CD4-positive, alpha-beta T cell (primary cell): ENCODE measurements at regions of chr14 and their contacts with region 1.

Region 1: DNA sequence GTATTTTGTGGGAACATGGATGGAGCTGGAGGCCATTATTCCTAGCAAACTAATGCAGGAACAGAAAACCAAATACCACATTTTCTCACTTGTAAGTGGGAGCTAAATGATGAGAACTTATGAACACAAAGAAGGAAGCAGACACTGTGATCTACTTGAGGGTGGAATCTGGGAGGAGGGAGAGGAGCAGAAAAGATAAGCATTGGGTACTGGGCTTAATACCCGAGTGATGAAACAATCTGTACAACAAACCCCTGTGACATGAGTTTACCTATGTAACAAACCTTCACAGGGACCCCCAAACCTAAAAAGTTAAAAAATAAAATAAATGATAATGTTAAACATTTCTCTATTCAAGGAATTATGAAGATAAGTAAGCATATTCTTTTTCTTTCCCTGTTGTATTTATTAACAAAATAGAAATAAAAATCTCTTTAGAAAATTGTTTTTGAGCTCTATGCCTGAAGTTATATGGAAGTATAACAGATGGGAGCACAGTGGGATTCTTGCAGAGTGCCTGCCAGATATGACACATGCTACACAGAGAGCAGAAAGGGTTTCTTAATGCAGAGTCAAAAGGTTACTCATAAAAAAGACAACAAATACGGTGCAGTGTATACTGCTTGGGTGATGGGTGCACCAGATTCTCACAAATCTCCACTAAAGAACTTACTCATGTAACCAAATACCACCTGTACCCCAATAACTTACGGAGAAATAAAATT is 52.0 kb upstream of the SYNE2 start:
- DNase-seq: no peak
- ATAC-seq: no peak
- H3K4me3 ChIP-seq: no peak overlapping the region
- H3K4me3 Mint-ChIP-seq: no peak overlapping the region
- H3K27ac ChIP-seq: no peak overlapping the region
- H3K27ac Mint-ChIP-seq: no peak overlapping the region
- H3K4me1 ChIP-seq: no peaks in the 10 kb centered on the region
- H3K4me1 Mint-ChIP-seq: peaks cover 5% of the 10 kb centered on the region
- H3K27me3 ChIP-seq: no peaks in the 10 kb centered on the region
- H3K27me3 Mint-ChIP-seq: no peaks in the 10 kb centered on the region
- CTCF ChIP-seq: no peak

Region 2: GRCh38 chr14:63737582-63738006 is 63.2 kb before region 1 on chr14:
- CTCF ChIA-PET with region 1: no interaction called
- POLR2A ChIA-PET with region 1: no interaction called
- intact Hi-C with region 1: no loop called
- DNase-seq: no peak
- ATAC-seq: no peak
- H3K4me3 ChIP-seq: peak overlapping the region; percentile 27
- H3K4me3 Mint-ChIP-seq: peak overlapping the region; percentile 76
- H3K27ac ChIP-seq: no peak overlapping the region
- H3K27ac Mint-ChIP-seq: peak overlapping the region; percentile 31
- H3K4me1 ChIP-seq: peaks cover 11% of the 10 kb centered on the region
- H3K4me1 Mint-ChIP-seq: peaks cover 11% of the 10 kb centered on the region
- H3K27me3 ChIP-seq: no peaks in the 10 kb centered on the region
- H3K27me3 Mint-ChIP-seq: no peaks in the 10 kb centered on the region
- CTCF ChIP-seq: no peak

Region 3: DNA sequence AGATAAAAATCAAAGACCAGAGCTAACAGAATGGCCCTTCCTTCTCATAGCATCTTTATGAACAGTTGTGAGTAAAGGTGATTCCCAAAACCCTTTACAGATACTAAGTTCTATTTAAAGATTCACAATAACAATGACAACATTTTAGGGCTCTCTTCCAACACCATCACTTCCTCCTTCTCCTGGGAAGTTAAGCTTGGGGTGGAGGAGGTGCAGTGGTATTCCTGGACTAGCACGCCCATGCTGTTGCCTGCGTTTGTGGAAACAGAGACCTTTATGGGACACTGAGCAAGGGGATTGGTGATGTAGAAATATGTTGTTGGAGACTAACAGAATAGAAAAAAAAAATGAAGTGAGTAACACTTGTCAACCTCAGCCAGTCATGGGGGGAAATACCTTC is 74.5 kb after region 1 on chr14:
- CTCF ChIA-PET with region 1: no interaction called
- POLR2A ChIA-PET with region 1: no interaction called
- intact Hi-C with region 1: no loop called
- DNase-seq: no peak
- ATAC-seq: no peak
- H3K4me3 ChIP-seq: no peak overlapping the region
- H3K4me3 Mint-ChIP-seq: no peak overlapping the region
- H3K27ac ChIP-seq: no peak overlapping the region
- H3K27ac Mint-ChIP-seq: no peak overlapping the region
- H3K4me1 ChIP-seq: peaks cover 31% of the 10 kb centered on the region
- H3K4me1 Mint-ChIP-seq: peaks cover 43% of the 10 kb centered on the region
- H3K27me3 ChIP-seq: no peaks in the 10 kb centered on the region
- H3K27me3 Mint-ChIP-seq: no peaks in the 10 kb centered on the region
- CTCF ChIP-seq: no peak

Region 4: GRCh38 chr14:63993992-63994391 is 193.2 kb after region 1 on chr14:
- CTCF ChIA-PET with region 1: no interaction called
- POLR2A ChIA-PET with region 1: no interaction called
- intact Hi-C with region 1: loop called (anchors 1 to 2 kb)
- DNase-seq: peak in 4 of 14 experiments; percentile 7 to 32 (median 26)
- ATAC-seq: peak; percentile 44
- H3K4me3 ChIP-seq: no peak overlapping the region
- H3K4me3 Mint-ChIP-seq: no peak overlapping the region
- H3K27ac ChIP-seq: no peak overlapping the region
- H3K27ac Mint-ChIP-seq: no peak overlapping the region
- H3K4me1 ChIP-seq: peaks cover 2% of the 10 kb centered on the region
- H3K4me1 Mint-ChIP-seq: no peaks in the 10 kb centered on the region
- H3K27me3 ChIP-seq: no peaks in the 10 kb centered on the region
- H3K27me3 Mint-ChIP-seq: no peaks in the 10 kb centered on the region
- CTCF ChIP-seq: peak; percentile 39

Region 5: DNA sequence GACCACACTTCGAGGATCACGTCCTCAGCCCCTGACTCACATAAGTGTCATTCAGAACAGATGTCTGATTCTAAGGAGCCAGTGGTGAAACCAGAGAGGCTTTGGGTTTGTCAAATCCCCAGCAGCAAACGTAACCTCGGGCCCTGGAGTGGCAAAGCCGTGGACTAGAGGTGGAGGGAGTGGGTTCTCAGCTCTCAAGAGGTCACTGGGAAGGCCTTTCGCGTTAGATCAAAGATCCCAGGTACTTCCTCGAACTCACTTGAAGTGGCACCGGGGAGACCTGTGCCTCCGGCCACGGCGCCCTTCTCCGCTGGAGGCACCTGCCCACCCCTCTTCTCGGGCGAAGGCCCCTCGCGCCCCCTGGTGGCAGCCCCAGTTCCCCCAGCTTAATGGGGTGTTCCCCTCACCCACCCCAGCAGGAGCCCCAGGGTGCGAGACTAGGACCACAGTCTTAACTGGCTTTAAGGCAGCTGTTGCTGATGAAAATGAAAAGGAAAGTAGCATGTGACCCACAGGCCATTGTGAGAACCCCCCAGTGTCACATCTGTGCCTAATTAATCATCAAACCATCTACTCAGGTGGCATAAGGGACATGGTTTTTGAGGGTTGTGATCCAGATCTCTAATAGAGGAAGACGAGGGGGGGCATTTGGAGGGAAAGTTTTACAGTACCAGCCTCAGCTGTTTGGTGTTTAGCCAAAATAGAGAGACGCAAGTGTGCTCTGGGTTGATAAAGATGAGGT is 494.0 kb after region 1 on chr14:
- CTCF ChIA-PET with region 1: interaction called, 5 read pairs
- POLR2A ChIA-PET with region 1: no interaction called
- intact Hi-C with region 1: loop called (anchors 1 to 2 kb)
- DNase-seq: peak; percentile 68 to 86 (median 77)
- ATAC-seq: peak; percentile 82
- H3K4me3 ChIP-seq: peak overlapping the region; percentile 60
- H3K4me3 Mint-ChIP-seq: peak overlapping the region; percentile 82
- H3K27ac ChIP-seq: no peak overlapping the region
- H3K27ac Mint-ChIP-seq: no peak overlapping the region
- H3K4me1 ChIP-seq: peaks cover 18% of the 10 kb centered on the region
- H3K4me1 Mint-ChIP-seq: peaks cover 15% of the 10 kb centered on the region
- H3K27me3 ChIP-seq: peaks cover 6 to 11% of the 10 kb centered on the region in 2 experiments
- H3K27me3 Mint-ChIP-seq: peaks cover 50% of the 10 kb centered on the region
- CTCF ChIP-seq: peak; percentile 73

Region 6: DNA sequence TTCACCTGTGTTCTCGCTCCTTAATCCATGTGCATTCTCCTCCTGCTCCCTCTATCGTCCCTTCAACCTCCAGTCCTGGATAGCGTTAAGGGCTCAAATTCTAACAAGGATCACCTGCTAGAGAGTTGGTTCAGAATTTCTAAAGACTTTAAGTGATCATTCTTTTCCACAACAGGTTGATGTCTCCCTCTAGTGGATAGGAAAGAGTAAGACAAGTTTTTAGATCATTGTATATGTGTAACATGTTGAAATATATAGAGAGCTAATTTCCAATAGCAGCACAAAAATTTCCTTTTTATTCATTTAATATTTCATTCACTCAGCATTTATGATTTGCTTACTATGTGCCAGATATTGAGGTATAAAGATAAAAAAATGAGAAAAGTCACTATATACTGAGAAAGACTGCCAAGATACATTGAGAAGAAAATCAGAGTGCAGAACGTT is 502.7 kb after region 1 on chr14:
- CTCF ChIA-PET with region 1: interaction called, 5 read pairs
- POLR2A ChIA-PET with region 1: no interaction called
- intact Hi-C with region 1: loop called (anchors 1 kb)
- DNase-seq: peak in 3 of 14 experiments; percentile 59 to 66 (median 59)
- ATAC-seq: peak; percentile 77
- H3K4me3 ChIP-seq: no peak overlapping the region
- H3K4me3 Mint-ChIP-seq: no peak overlapping the region
- H3K27ac ChIP-seq: no peak overlapping the region
- H3K27ac Mint-ChIP-seq: no peak overlapping the region
- H3K4me1 ChIP-seq: no peaks in the 10 kb centered on the region
- H3K4me1 Mint-ChIP-seq: peaks cover 4% of the 10 kb centered on the region
- H3K27me3 ChIP-seq: no peaks in the 10 kb centered on the region
- H3K27me3 Mint-ChIP-seq: peaks cover 11% of the 10 kb centered on the region
- CTCF ChIP-seq: peak; percentile 89